ENCODE measurements at regions of chr14 and their contacts with region 1.

Region 1: DNA sequence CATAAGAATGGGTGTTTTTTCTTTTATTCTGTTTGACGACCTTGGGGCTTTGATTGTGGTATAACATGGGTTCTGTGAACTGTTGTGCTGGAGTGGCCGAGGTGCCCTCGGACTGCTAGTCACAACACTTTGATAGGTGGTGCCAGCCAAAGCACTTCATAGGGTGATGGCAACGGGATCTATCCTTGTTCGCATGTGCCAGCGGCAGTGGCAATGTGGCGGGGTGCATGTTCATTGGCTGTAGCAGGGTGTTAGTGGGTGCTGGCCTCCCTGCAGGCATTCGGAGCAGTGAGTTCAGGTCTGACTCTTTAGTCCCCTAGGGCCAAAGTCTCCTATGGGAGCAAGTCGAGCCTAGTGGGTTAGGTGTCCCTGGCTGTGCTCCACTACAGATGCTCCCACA is 125.2 kb downstream of the FUT8 start:
- DNase-seq: no peak
- H3K4me3 ChIP-seq: no peak overlapping the region
- H3K27ac ChIP-seq: no peak overlapping the region
- H3K4me1 ChIP-seq: no peaks in the 10 kb centered on the region
- CTCF ChIP-seq: no peak

Region 2: DNA sequence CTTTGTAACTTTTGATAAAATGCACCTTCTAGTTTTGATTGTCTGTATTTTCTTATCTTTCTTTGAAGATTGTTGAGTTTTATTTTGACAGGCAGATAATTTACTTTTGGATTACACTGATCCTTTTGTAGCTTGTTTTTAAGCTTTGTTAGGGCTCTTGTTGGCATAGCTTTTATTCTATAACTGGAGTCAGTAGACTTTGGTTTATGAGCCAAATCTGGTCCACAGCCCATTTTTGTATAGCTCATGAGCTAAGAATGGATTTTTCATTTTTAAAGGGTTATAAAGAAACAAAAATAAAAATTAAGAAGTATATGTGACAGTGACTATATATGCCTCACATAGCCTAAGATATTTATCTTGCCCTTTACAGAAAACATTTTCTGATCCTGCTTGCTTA is 17.1 kb after region 1 on chr14:
- CTCF ChIA-PET with region 1: no interaction called
- POLR2A ChIA-PET with region 1: interaction called, 12 read pairs
- intact Hi-C with region 1: no loop called
- DNase-seq: no peak
- H3K4me3 ChIP-seq: no peak overlapping the region
- H3K27ac ChIP-seq: no peak overlapping the region
- H3K4me1 ChIP-seq: peaks cover 25% of the 10 kb centered on the region
- CTCF ChIP-seq: no peak

Region 3: GRCh38 chr14:65750906-65751305 is 213.1 kb after region 1 on chr14:
- CTCF ChIA-PET with region 1: no interaction called
- POLR2A ChIA-PET with region 1: no interaction called
- intact Hi-C with region 1: no loop called
- DNase-seq: no peak
- H3K4me3 ChIP-seq: no peak overlapping the region
- H3K27ac ChIP-seq: no peak overlapping the region
- H3K4me1 ChIP-seq: no peaks in the 10 kb centered on the region
- CTCF ChIP-seq: no peak

Measured in OCI-LY7 (cell line).